A549 (cell line): ENCODE measurements at regions of chr10 and their contacts with region 1.

Region 1: DNA sequence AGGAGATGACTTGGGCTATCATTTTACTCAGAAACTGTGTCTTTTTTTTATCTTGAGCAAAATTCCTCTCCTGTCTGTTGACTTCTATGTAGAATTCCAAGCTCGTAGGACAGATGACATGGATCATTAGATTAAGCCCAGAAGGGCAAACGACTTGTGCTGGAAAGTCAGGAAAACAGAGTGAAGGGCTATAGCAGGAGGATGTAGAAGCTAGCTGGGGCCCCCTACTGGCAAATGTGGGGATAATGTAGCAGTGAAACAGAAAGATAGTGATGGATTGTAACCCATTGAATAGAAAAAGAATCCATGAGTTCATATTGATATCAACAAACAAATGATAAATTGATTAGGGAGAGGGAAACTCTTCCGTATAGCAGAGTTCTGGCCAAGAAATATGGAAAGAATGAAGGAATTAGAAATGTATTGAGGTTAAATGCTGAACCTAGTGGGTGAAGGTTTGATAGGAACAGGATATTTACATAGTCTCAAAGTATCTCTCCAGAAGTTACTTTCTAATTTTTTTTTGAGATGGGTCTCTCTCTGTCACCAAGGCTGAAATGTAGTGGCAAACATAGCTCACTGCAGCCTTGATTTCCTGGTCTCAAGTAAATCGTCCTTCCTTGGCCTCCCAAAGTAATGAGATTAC is 103.6 kb downstream of the LYZL1 start:
- DNase-seq: peak; percentile 47 to 54
- ATAC-seq: peak; percentile 72 to 88; a peak in 4 of 6 replicates
- H3K4me3 ChIP-seq: no peak overlapping the region
- H3K27ac ChIP-seq: no peak overlapping the region
- H3K4me1 ChIP-seq: no peaks in the 10 kb centered on the region
- CTCF ChIP-seq: peak; percentile 81
- EP300 ChIP-seq: no peak
- POLR2A ChIP-seq: no peak
- RAD21 ChIP-seq: peak; percentile 72 to 77

Region 2: DNA sequence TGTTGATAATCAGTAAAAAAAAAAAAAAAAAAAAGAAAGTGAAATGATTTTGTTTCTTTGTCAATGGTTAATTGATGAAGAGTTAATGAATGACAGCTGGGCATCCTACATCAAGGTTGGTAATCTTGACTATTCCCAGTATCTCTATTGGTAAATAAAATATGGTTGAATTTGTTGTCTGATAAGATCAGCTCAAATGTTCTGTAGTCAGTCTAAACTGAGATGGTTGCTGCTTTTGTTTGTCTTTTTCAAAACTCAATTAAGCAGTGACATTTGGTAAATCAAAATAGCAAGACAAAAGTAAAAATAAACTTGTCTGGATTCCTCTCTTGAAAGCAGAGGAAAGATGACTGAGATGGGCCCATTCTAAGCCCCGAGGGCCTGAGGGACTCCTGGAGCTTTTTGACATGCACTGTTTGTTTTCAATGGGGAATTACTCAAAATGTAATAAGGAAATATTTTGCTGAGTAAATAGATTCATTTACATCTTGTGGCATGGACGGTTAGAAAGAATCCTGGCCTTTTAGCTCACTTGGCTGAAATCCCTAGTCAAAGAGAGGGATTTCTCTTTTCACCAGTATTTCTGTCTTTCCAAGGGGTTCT is 1755.0 kb before region 1 on chr10:
- CTCF ChIA-PET with region 1: no interaction called
- POLR2A ChIA-PET with region 1: no interaction called
- DNase-seq: no peak
- ATAC-seq: no peak
- H3K4me3 ChIP-seq: no peak overlapping the region
- H3K27ac ChIP-seq: no peak overlapping the region
- H3K4me1 ChIP-seq: no peaks in the 10 kb centered on the region
- CTCF ChIP-seq: no peak
- EP300 ChIP-seq: no peak
- POLR2A ChIP-seq: no peak
- RAD21 ChIP-seq: no peak

Region 3: GRCh38 chr10:28628184-28628893 is 764.2 kb before region 1 on chr10:
- CTCF ChIA-PET with region 1: interaction called, 22 read pairs
- POLR2A ChIA-PET with region 1: no interaction called
- DNase-seq: peak; percentile 80 to 84
- ATAC-seq: peak; percentile 89 to 92
- H3K4me3 ChIP-seq: no peak overlapping the region
- H3K27ac ChIP-seq: peak overlapping the region; percentile 26 to 55; a peak in 5 of 6 replicates
- H3K4me1 ChIP-seq: peaks cover 19% of the 10 kb centered on the region
- CTCF ChIP-seq: peak; percentile 96
- EP300 ChIP-seq: no peak
- POLR2A ChIP-seq: no peak
- RAD21 ChIP-seq: peak; percentile 92 to 97

Region 4: DNA sequence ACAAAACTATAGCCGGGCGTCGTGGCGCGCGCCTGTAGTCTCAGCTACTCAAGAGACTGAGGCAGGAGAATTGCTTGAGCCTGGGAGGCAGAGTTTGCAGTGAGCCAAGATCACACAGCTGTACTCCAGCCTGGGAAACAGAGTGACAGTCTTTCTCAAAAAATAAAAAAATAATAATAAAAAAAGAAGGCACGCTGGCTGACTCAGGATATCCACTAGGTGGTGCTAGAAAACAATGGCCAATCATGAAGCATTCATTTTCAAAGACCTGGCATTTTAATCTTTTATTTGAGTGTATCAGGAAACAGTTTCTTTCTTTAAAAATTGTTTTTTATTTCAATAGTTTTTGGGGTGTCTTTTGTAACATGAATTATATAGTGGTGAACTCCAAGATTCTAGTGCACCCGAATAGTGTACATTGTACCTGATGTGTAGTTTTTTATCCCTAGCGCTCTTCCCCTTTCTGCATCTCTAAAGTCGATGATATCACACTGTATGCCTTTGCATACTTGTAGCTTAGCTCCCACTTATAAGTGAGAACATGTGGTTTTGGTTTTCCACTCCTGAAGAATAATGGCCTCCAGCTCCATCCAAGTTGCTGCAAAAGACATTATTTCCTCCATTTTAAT is 15.1 kb before region 1 on chr10:
- CTCF ChIA-PET with region 1: interaction called, 23 read pairs
- POLR2A ChIA-PET with region 1: no interaction called
- DNase-seq: peak; percentile 21 to 43
- ATAC-seq: peak in 1 of 2 experiments; percentile 64; a peak in 2 of 6 replicates
- H3K4me3 ChIP-seq: no peak overlapping the region
- H3K27ac ChIP-seq: no peak overlapping the region
- H3K4me1 ChIP-seq: no peaks in the 10 kb centered on the region
- CTCF ChIP-seq: peak; percentile 69
- EP300 ChIP-seq: no peak
- POLR2A ChIP-seq: no peak
- RAD21 ChIP-seq: peak; percentile 48 to 61; a peak in 4 of 5 replicates

Region 5: DNA sequence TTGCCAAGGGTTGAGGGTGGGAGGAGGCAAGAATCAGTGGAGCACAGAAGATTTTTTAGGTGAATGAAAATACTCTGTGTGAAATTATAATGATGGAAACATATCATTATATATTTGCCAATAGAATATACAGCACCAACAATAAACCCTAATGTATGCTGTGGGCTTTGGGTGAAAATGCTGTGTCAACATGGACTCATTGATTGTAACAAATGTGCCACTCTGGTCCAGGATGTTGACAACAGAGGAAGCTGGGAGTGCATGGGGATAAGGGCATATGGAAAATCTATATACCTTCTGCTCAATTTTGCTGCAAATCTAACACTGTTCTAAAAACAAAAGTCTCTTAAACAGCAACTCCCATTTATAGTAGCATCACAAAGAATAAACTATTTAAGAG is 10.7 kb after region 1 on chr10:
- CTCF ChIA-PET with region 1: interaction called, 22 read pairs
- POLR2A ChIA-PET with region 1: no interaction called
- DNase-seq: no peak
- ATAC-seq: no peak
- H3K4me3 ChIP-seq: no peak overlapping the region
- H3K27ac ChIP-seq: no peak overlapping the region
- H3K4me1 ChIP-seq: no peaks in the 10 kb centered on the region
- CTCF ChIP-seq: no peak
- EP300 ChIP-seq: no peak
- POLR2A ChIP-seq: no peak
- RAD21 ChIP-seq: no peak

Region 6: GRCh38 chr10:29409241-29410057 is 16.9 kb after region 1 on chr10:
- CTCF ChIA-PET with region 1: interaction called, 22 read pairs
- POLR2A ChIA-PET with region 1: no interaction called
- DNase-seq: peak; percentile 79 to 80
- ATAC-seq: peak; percentile 98
- H3K4me3 ChIP-seq: peak overlapping the region; percentile 62
- H3K27ac ChIP-seq: peak overlapping the region; percentile 78 to 89
- H3K4me1 ChIP-seq: peaks cover 22% of the 10 kb centered on the region; the same call in 2 of the 3 replicates
- CTCF ChIP-seq: no peak
- EP300 ChIP-seq: no peak
- POLR2A ChIP-seq: peak; percentile 91
- RAD21 ChIP-seq: no peak